Heart left ventricle (tissue), 16 donors: ENCODE measurements at regions of chr9 and their contacts with region 1.

Region 1: GRCh38 chr9:70587201-70587600 is 172.7 kb upstream of the KLF9 start:
- DNase-seq: peak in 2 of 5 donors; percentile 44 to 47
- ATAC-seq: peak; percentile 69 to 83 (median 78)
- H3K4me3 ChIP-seq: no peak overlapping the region
- H3K27ac ChIP-seq: peak overlapping the region; percentile 59 to 92 (median 83)
- H3K4me1 ChIP-seq: peaks cover 9 to 63% (median 43%) of the 10 kb centered on the region in 12 donors
- H3K27me3 ChIP-seq: no peaks in the 10 kb centered on the region
- CTCF ChIP-seq: no peak
- POLR2A ChIP-seq: no peak

Region 2: GRCh38 chr9:70413798-70414775 is 173.1 kb before region 1 on chr9 and contains the start of gene KLF9:
- intact Hi-C with region 1: loop called in 3 of 10 experiments (anchors 5 kb)
- DNase-seq: peak; percentile 93 to 97 (median 95)
- ATAC-seq: peak; percentile 77 to 82 (median 80)
- H3K4me3 ChIP-seq: peak within 1 kb of the TSS; percentile 76 to 99 (median 90)
- H3K27ac ChIP-seq: peak within 1 kb of the TSS; percentile 98 to 100 (median 100)
- H3K4me1 ChIP-seq: peaks cover 10 to 64% (median 53%) of the 10 kb centered on the region in 12 donors
- H3K27me3 ChIP-seq: no peaks in the 10 kb centered on the region
- CTCF ChIP-seq: no peak
- POLR2A ChIP-seq: peak; percentile 48 to 97
- total RNA-seq, gene KLF9: 28.7 to 74.8 (median 46.0) TPM

Region 3: GRCh38 chr9:70419546-70420266 is 167.5 kb before region 1 on chr9:
- intact Hi-C with region 1: loop called in 4 of 10 experiments (anchors 5 kb)
- DNase-seq: peak; percentile 96 to 98 (median 96)
- ATAC-seq: peak; percentile 51 to 76 (median 74)
- H3K4me3 ChIP-seq: peak overlapping the region; percentile 19 to 81 (median 58)
- H3K27ac ChIP-seq: peak overlapping the region; percentile 98 to 100 (median 100)
- H3K4me1 ChIP-seq: peaks cover 24 to 67% (median 53%) of the 10 kb centered on the region in 12 donors
- H3K27me3 ChIP-seq: no peaks in the 10 kb centered on the region
- CTCF ChIP-seq: peak in 2 of 12 donors; percentile 17 to 36
- POLR2A ChIP-seq: peak in 1 of 2 donors; percentile 77

Region 4: DNA sequence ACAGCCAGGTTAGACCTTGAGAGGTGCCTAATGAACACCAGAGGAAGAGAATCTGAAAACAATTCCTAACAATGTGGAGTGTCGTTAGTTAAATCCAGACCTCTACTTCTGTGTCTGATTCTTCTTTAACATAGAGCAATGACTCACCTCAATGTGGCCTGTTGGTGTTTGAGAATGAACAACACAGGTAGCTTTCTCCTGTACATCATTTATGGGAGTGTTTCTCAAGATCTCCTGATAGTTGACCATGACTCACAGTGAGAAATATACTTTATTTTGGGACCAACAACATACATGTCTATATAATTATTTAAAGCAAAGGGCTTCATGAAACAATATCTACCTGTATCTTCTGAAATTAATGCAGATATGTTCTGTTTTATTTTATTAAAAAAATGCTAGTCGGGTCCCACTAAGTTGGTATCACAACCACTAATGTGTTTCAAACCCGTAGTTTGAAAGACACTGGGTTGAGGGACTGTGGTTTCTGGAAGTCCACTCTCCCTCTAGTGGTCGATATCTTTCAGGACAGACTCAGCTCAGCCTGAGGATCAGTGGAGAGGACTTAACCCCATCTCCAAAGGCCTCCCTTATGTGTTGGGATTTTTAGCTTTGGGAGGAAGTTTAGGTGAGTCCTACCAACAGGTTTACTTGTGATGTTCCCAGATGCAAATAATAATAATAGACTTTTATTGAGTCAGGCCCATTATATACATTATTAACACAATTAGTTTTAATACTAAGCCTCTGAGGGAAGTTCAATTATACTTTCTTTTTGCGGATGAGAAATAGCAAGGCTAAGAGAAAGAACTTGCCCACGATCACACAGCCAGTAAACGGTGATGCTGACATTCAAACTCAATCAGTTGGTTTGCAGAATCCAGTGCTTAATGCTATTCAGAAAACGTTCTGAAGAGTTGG is 102.7 kb before region 1 on chr9:
- intact Hi-C with region 1: loop called in 2 of 10 experiments (anchors 5 kb)
- DNase-seq: peak in 2 of 5 donors; percentile 48 to 56
- ATAC-seq: peak; percentile 45 to 74 (median 69)
- H3K4me3 ChIP-seq: no peak overlapping the region
- H3K27ac ChIP-seq: peak overlapping the region; percentile 14 to 95 (median 72)
- H3K4me1 ChIP-seq: peaks cover 30 to 83% (median 62%) of the 10 kb centered on the region in 12 donors
- H3K27me3 ChIP-seq: no peaks in the 10 kb centered on the region
- CTCF ChIP-seq: peak; percentile 59 to 88 (median 79)
- POLR2A ChIP-seq: no peak

Region 5: DNA sequence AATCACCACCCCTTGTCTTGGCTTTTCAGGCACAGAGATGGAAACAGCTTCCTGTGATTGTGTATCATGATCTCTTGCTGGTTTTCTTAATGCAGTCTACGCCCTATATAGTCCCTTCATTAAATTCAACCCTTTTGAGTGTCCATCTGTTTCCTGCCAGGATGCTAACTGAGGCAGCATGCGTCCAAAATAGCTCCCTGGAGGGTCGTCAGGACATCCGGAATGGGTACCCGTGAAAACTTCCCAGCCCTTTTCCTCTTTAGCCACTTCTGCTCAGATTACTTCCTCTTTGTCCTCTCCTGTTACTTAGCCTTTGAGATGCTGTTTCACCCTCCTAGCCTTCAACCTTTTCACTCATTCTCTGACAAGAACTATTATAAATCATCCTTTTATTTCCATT is 93.0 kb before region 1 on chr9:
- intact Hi-C with region 1: loop called in 2 of 10 experiments (anchors 5 kb)
- DNase-seq: peak in 2 of 5 donors; percentile 49 to 63
- ATAC-seq: peak in 3 of 4 donors; percentile 41 to 74 (median 57)
- H3K4me3 ChIP-seq: no peak overlapping the region
- H3K27ac ChIP-seq: peak overlapping the region in 10 of 12 donors; percentile 2 to 80 (median 51)
- H3K4me1 ChIP-seq: peaks cover 4 to 57% (median 34%) of the 10 kb centered on the region in 12 donors
- H3K27me3 ChIP-seq: no peaks in the 10 kb centered on the region
- CTCF ChIP-seq: no peak
- POLR2A ChIP-seq: no peak

Region 6: GRCh38 chr9:70504834-70505233 is 82.4 kb before region 1 on chr9:
- intact Hi-C with region 1: loop called in 3 of 10 experiments (anchors 5 to 10 kb)
- DNase-seq: no peak
- ATAC-seq: peak in 1 of 4 donors; percentile 36
- H3K4me3 ChIP-seq: no peak overlapping the region
- H3K27ac ChIP-seq: peak overlapping the region in 8 of 12 donors; percentile 12 to 66 (median 37)
- H3K4me1 ChIP-seq: peaks cover 0 to 34% (median 5%) of the 10 kb centered on the region in 12 donors
- H3K27me3 ChIP-seq: no peaks in the 10 kb centered on the region
- CTCF ChIP-seq: no peak
- POLR2A ChIP-seq: no peak

Region 7: GRCh38 chr9:70510157-70510770 is 76.9 kb before region 1 on chr9:
- intact Hi-C with region 1: loop called in 2 of 10 experiments (anchors 5 to 10 kb)
- DNase-seq: peak in 2 of 5 donors; percentile 35 to 63
- ATAC-seq: peak in 1 of 4 donors; percentile 52
- H3K4me3 ChIP-seq: no peak overlapping the region
- H3K27ac ChIP-seq: no peak overlapping the region
- H3K4me1 ChIP-seq: peaks cover 0 to 8% (median 0%) of the 10 kb centered on the region in 12 donors
- H3K27me3 ChIP-seq: no peaks in the 10 kb centered on the region
- CTCF ChIP-seq: peak; percentile 25 to 77 (median 52)
- POLR2A ChIP-seq: no peak